ENCODE measurements at regions of chr5 and their contacts with region 1.

Region 1: DNA sequence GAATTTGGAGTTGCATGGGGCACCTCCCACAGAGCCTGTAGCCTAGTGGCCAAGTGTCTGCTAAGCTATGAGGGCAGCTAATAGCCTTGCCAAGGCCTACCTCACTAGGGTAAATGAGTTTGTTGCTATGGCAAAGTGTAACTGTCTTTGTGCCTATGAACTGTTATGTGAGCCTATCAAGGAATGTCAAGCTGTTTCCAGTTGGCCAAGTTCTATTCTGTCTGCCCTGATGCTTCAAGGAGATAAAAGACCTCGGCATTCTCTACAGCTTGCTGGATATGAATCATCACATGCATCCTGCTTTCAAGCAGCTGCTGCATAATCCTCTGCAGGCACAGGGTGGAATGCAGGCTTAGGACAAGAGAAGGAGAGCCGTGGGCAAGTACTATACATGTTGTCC is 69.8 kb upstream of the CCDC112 start:
- DNase-seq: peak in 1 of 5 donors; percentile 37
- ATAC-seq: peak; percentile 42 to 84 (median 79)
- H3K4me3 ChIP-seq: no peak overlapping the region
- H3K27ac ChIP-seq: peak overlapping the region in 6 of 12 donors; percentile 6 to 56 (median 30)
- H3K4me1 ChIP-seq: peaks cover 0 to 12% (median 4%) of the 10 kb centered on the region in 12 donors
- H3K27me3 ChIP-seq: no peaks in the 10 kb centered on the region
- CTCF ChIP-seq: no peak
- POLR2A ChIP-seq: no peak

Region 2: DNA sequence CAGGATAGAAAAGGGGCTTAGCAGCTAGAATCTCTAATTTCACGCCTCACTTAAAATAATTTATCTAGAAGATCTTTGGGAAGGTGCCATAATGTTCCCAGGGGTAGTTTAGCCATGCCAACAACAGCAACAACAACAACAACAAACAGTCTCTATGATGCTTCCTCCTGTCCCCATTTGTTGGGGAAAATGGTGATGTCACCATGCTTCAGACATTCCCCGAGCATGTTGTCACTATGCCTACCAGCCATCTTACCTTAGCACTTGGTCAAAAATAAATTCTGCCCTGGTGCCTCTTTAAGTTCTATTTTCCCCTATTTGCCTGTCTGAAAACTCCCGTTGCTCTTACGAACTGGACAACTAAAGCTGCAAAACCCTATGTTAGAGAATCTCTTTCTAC is 927.8 kb before region 1 on chr5:
- intact Hi-C with region 1: no loop called
- DNase-seq: no peak
- ATAC-seq: no peak
- H3K4me3 ChIP-seq: no peak overlapping the region
- H3K27ac ChIP-seq: no peak overlapping the region
- H3K4me1 ChIP-seq: peaks cover 0 to 12% (median 0%) of the 10 kb centered on the region in 12 donors
- H3K27me3 ChIP-seq: no peaks in the 10 kb centered on the region
- CTCF ChIP-seq: no peak
- POLR2A ChIP-seq: no peak

Region 3: GRCh38 chr5:115028557-115028956 is 337.7 kb before region 1 on chr5:
- intact Hi-C with region 1: no loop called
- DNase-seq: no peak
- ATAC-seq: no peak
- H3K4me3 ChIP-seq: no peak overlapping the region
- H3K27ac ChIP-seq: no peak overlapping the region
- H3K4me1 ChIP-seq: no peaks in the 10 kb centered on the region
- H3K27me3 ChIP-seq: no peaks in the 10 kb centered on the region
- CTCF ChIP-seq: no peak
- POLR2A ChIP-seq: no peak

Region 4: GRCh38 chr5:115147052-115147451 is 219.2 kb before region 1 on chr5:
- intact Hi-C with region 1: no loop called
- DNase-seq: no peak
- ATAC-seq: no peak
- H3K4me3 ChIP-seq: no peak overlapping the region
- H3K27ac ChIP-seq: no peak overlapping the region
- H3K4me1 ChIP-seq: no peaks in the 10 kb centered on the region
- H3K27me3 ChIP-seq: no peaks in the 10 kb centered on the region
- CTCF ChIP-seq: no peak
- POLR2A ChIP-seq: no peak

Region 5: GRCh38 chr5:115319007-115319406 is 47.2 kb before region 1 on chr5:
- intact Hi-C with region 1: loop called in 8 of 10 experiments (anchors 5 to 10 kb)
- DNase-seq: no peak
- ATAC-seq: peak; percentile 73 to 86 (median 81)
- H3K4me3 ChIP-seq: no peak overlapping the region
- H3K27ac ChIP-seq: peak overlapping the region in 9 of 12 donors; percentile 5 to 49 (median 28)
- H3K4me1 ChIP-seq: peaks cover 0 to 15% (median 2%) of the 10 kb centered on the region in 12 donors
- H3K27me3 ChIP-seq: no peaks in the 10 kb centered on the region
- CTCF ChIP-seq: no peak
- POLR2A ChIP-seq: no peak

Region 6: DNA sequence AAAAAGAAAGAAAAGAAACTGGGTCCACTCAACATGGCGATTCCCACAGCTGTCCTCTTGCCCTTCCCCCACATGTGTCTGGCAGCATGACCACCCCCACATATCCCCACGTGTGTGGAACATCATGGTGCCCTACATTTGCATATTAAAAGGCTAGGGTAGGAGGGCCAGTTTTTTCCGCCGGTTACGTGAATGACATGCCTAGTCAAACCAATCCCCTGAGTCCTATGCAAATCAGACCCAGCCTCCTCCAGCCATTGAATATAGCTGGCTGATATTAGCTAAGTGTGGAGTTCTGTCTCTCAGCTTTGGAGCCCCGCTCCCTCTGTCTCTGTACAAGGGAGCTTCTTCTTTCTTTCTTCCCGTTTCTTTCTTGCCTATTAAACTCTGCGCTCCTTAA is 36.7 kb before region 1 on chr5:
- intact Hi-C with region 1: loop called in 1 of 10 experiments (anchors 5 kb)
- DNase-seq: no peak
- ATAC-seq: no peak
- H3K4me3 ChIP-seq: no peak overlapping the region
- H3K27ac ChIP-seq: no peak overlapping the region
- H3K4me1 ChIP-seq: peaks cover 0 to 17% (median 6%) of the 10 kb centered on the region in 12 donors
- H3K27me3 ChIP-seq: no peaks in the 10 kb centered on the region
- CTCF ChIP-seq: no peak
- POLR2A ChIP-seq: no peak